ENCODE measurements at regions of chr16 and their contacts with region 1.

Region 1: DNA sequence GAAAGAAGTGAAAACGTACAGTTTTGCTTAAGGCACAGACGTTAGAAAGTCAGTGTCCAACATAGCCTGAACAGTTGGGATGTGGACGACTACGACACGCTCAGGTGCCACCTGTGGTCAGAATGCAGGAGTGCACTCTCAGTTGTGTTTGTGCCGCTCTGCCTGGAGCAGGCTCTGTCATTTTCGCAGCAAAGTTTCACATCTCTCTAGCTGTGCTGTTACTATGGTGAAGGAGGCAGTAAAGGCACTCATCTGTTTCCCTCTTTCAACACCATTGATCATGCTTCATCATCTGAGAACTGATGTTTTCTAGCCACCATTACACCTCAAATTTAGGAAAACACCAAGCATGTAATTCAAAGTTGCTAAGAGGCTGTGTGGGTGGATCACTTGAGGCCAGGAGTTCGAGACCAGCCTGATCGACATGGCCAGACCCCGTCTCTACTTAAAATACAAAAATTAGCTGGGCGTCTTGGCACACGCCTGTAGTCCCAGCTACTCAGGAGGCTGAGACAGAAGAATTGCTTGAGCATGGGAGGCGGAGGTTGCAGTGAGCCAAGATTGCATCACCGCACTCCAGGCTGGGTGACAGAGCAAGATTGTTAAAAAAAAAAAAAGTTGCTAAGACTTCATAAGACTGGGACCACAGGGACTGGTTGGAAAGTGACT is 44.9 kb upstream of the DNAJA2 start:
- DNase-seq: peak; percentile 72
- H3K4me3 Mint-ChIP-seq: no peak overlapping the region
- H3K27ac Mint-ChIP-seq: no peak overlapping the region
- H3K4me1 Mint-ChIP-seq: no peaks in the 10 kb centered on the region
- H3K27me3 Mint-ChIP-seq: no peaks in the 10 kb centered on the region
- CTCF ChIP-seq: peak; percentile 49

Region 2: DNA sequence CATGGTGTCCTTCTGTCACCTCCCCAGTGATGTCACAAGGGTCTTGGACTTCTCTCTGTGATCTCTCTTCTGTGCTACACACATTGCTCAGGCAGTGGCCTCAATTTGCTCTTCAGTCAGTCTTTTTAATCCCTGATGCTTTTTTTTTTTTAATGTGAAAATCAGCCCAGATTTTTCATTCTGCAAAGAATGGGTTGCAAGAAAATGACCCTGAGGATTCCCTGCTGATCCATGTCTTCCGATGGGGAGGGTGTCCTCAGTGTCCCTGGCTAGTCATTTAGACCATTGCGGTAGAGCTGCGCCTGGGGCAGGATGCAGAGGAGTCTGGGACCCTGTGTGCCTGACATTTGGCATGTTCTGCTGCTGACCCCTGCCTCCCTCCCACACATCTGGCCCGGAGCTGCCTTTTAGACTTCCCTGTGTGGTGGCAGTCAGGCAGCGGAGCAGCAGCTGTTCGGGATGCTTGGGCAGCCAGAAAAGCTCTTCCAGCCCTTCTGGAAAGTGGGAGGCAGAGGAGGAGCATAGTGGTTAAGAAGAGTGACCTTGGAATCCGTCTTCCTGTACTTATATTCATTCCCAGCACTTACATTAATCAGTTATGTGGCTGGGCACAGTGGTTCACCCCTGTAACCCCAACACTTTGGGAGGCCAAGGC is 121.9 kb before region 1 on chr16:
- CTCF ChIA-PET with region 1: no interaction called
- intact Hi-C with region 1: no loop called
- DNase-seq: no peak
- H3K4me3 Mint-ChIP-seq: no peak overlapping the region
- H3K27ac Mint-ChIP-seq: no peak overlapping the region
- H3K4me1 Mint-ChIP-seq: peaks cover 19% of the 10 kb centered on the region
- H3K27me3 Mint-ChIP-seq: no peaks in the 10 kb centered on the region
- CTCF ChIP-seq: no peak

Region 3: DNA sequence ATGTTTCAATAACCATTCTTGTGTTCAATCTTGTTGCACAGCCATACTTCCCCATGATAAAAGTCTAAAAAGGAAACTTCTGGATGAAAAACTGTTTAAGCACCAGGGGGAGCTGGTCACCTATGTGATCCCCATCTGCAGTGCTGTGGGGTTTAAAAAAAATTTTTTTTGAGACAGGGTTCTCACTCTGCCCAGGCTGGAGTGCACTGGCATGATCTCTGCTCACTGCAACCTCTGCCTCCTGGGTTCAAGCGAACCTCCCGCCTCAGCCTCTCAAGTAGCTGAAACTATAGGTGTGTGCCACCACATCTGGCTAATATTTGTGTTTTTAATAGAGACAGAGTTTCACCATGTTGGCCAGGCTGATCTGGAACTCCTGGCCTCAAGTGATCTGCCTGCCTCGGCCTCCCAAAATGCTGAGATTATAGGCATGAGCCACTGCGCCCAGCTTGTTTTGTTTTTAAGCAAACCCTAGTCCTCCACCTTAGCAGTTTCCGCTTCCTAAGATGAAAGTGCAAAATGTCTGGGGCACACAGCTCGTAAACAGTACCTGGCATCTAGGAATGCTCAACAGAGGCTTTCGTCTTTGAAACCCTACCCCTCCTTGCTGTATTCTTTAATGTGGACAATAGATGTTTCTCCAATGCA is 70.3 kb before region 1 on chr16:
- CTCF ChIA-PET with region 1: no interaction called
- intact Hi-C with region 1: loop called (anchors 1 kb)
- DNase-seq: peak; percentile 66
- H3K4me3 Mint-ChIP-seq: no peak overlapping the region
- H3K27ac Mint-ChIP-seq: no peak overlapping the region
- H3K4me1 Mint-ChIP-seq: peaks cover 9% of the 10 kb centered on the region
- H3K27me3 Mint-ChIP-seq: no peaks in the 10 kb centered on the region
- CTCF ChIP-seq: peak; percentile 57

Region 4: DNA sequence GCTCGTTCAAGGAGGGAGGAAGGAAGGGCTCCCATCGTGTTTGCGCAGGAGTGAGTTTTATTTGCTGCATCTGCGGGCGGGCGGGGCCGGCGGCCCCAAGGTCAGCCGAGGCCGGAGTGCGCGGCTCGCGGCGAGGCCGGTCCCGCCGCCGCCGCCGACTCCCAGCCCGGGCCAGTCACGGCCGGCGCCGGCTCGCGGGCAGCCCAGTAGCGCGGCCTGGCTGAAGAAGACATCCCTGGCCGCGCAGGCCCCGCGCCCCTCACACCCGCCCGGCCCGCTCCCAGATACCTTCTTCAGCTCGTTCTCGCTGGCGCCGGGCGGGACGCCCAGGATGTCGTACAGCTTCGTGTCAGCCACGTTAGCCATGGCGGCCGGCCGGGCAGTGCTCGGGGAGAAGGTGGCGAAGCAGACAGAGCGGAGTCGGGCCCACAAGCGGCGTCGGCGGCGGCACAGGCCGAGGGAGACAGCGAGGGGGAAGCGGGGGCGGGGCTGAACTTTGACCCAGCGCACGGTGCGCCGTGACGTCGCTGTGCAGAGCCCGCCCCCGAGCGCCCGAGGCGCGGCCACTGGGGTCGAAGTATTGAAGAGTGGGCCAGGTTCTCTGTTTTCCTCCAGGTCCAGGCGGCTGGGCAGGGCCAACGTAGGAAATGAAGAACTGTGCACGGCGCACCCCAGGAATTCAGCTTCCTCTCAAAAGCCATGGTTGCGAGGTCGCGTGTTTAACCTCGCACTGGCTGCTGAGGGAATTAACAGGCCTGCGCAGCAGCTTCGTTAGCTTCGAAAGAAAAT is 45.0 kb before region 1 on chr16 and contains the start of gene DNAJA2:
- CTCF ChIA-PET with region 1: interaction called, 5 read pairs
- intact Hi-C with region 1: loop called (anchors 2 kb)
- DNase-seq: peak; percentile 97
- H3K4me3 Mint-ChIP-seq: peak within 1 kb of the TSS; percentile 74
- H3K27ac Mint-ChIP-seq: peak within 1 kb of the TSS; percentile 93
- H3K4me1 Mint-ChIP-seq: peaks cover 50% of the 10 kb centered on the region
- H3K27me3 Mint-ChIP-seq: no peaks in the 10 kb centered on the region
- CTCF ChIP-seq: no peak
- total RNA-seq, gene DNAJA2: 76.8 and 80.1 TPM in 2 replicates

Region 5: GRCh38 chr16:47037746-47038458 is 19.5 kb after region 1 on chr16:
- CTCF ChIA-PET with region 1: interaction called, 15 read pairs
- intact Hi-C with region 1: no loop called
- DNase-seq: peak; percentile 97
- H3K4me3 Mint-ChIP-seq: peak overlapping the region; percentile 76
- H3K27ac Mint-ChIP-seq: no peak overlapping the region
- H3K4me1 Mint-ChIP-seq: no peaks in the 10 kb centered on the region
- H3K27me3 Mint-ChIP-seq: peaks cover 25% of the 10 kb centered on the region
- CTCF ChIP-seq: peak; percentile 94

Region 6: GRCh38 chr16:47096297-47096696 is 77.9 kb after region 1 on chr16:
- CTCF ChIA-PET with region 1: no interaction called
- intact Hi-C with region 1: no loop called
- DNase-seq: no peak
- H3K4me3 Mint-ChIP-seq: no peak overlapping the region
- H3K27ac Mint-ChIP-seq: no peak overlapping the region
- H3K4me1 Mint-ChIP-seq: no peaks in the 10 kb centered on the region
- H3K27me3 Mint-ChIP-seq: no peaks in the 10 kb centered on the region
- CTCF ChIP-seq: no peak

Region 7: DNA sequence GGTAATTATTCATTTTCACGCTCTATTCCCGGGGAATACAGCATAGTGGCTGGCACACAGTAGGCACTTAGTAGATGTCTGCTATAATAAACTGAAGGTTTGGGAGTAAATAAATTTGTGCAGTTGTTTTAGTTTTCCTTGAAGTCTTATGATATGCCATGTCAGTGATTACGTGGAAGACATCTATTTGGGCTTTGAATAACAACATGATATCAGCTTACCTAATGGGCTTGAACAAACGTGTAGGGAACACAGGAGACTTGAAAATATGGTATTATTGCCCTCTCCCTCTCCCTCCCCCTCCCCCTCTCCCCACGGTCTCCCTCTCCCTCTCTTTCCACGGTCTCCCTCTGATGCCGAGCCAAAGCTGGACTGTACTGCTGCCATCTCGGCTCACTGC is 161.7 kb after region 1 on chr16:
- CTCF ChIA-PET with region 1: no interaction called
- intact Hi-C with region 1: no loop called
- DNase-seq: no peak
- H3K4me3 Mint-ChIP-seq: no peak overlapping the region
- H3K27ac Mint-ChIP-seq: no peak overlapping the region
- H3K4me1 Mint-ChIP-seq: no peaks in the 10 kb centered on the region
- H3K27me3 Mint-ChIP-seq: no peaks in the 10 kb centered on the region
- CTCF ChIP-seq: no peak

Measured in Calu3 (cell line).